Activated CD4-positive, alpha-beta T cell treated with anti-CD3 and anti-CD28 coated beads, Interleukin-2, amount 10 ng/mL, durations not matched to agents 24 days and 14 days (primary cell): ENCODE measurements at regions of chr5 and their contacts with region 1.

Region 1: GRCh38 chr5:94793113-94793815 is 174.8 kb downstream of the SLF1 start:
- DNase-seq: peak; percentile 84
- H3K4me3 Mint-ChIP-seq: peak overlapping the region; percentile 78
- H3K27ac Mint-ChIP-seq: peak overlapping the region; percentile 95
- H3K4me1 Mint-ChIP-seq: peaks cover 42% of the 10 kb centered on the region
- H3K27me3 Mint-ChIP-seq: peaks cover 9% of the 10 kb centered on the region

Region 2: DNA sequence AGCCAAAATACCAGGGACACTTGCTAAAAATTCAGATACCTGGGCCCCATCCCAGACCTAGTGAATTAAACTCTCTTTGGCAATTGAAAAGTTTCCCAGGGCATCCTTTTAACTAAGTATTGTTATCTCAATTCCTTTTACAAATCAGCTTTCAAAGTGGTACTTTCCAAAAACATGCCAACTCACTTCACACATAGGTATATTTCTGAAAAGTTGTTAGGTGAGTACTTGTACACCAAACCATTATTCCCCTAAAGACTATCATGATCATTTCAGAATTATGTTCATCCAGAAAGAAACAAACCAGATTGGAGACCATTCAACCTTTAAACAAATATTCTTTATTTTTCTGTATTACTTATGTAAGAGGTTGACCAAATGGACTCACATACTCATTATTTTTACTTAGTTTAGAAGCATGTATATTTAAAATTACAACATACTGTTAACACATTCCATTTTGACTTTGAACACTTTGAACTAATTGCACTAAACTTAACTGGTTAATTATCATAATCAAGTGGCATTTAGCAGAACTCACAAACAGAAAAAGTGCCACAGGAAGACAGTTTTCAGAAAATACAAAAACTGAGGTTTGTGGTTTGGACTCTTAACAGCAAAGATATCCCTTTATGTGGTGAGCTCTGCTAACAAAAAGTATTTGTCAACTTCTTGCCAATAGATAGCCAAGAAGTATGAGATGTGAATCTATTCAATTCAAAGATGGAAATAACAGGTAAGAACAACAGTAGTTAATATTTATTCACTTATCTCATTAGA is 215.6 kb before region 1 on chr5:
- intact Hi-C with region 1: loop called (anchors 1 kb)
- DNase-seq: peak; percentile 75
- H3K4me3 Mint-ChIP-seq: peak overlapping the region; percentile 36
- H3K27ac Mint-ChIP-seq: peak overlapping the region; percentile 20
- H3K4me1 Mint-ChIP-seq: peaks cover 42% of the 10 kb centered on the region
- H3K27me3 Mint-ChIP-seq: no peaks in the 10 kb centered on the region

Region 3: DNA sequence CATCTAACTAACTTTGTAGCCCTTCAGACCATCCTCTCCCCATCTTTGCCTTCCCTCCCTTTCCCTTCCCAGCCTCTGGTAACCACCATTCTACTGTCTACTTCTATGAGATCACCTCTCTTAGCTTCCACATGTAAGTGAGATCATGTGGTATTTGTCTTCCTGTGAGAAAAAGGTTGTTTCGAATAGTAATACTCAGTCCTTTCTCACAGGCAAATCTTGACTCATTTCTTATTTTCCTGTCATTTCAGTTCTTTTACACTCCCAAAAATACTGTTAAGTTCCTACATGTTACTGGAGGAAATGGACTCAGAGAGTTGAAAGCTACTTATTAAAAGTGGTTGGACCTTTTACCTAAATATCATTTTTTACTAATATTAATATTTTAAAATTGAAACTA is 92.7 kb before region 1 on chr5:
- intact Hi-C with region 1: loop called (anchors 5 kb)
- DNase-seq: no peak
- H3K4me3 Mint-ChIP-seq: no peak overlapping the region
- H3K27ac Mint-ChIP-seq: peak overlapping the region; percentile 4
- H3K4me1 Mint-ChIP-seq: peaks cover 11% of the 10 kb centered on the region
- H3K27me3 Mint-ChIP-seq: no peaks in the 10 kb centered on the region

Region 4: DNA sequence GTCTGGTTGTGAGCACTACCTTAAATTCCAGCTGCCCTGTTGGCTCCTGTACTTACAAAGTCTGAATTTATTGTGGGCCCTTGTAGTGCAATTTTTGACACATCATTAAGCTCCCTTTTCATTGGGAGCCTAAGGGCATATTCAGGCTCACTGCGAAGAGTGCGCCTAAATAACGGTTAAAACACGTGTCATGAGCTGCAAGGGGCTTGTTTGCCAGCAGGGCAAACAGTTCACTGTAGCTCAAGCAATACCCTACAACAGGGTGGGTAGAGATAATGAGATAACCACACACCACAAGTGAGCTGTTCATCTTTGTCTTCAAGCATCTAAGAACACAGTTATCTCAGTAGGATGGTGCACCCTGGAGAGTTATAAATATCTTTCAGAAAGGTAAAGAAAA is 39.4 kb after region 1 on chr5:
- intact Hi-C with region 1: loop called (anchors 2 kb)
- DNase-seq: no peak
- H3K4me3 Mint-ChIP-seq: no peak overlapping the region
- H3K27ac Mint-ChIP-seq: no peak overlapping the region
- H3K4me1 Mint-ChIP-seq: peaks cover 6% of the 10 kb centered on the region
- H3K27me3 Mint-ChIP-seq: peaks cover 16% of the 10 kb centered on the region

Region 5: DNA sequence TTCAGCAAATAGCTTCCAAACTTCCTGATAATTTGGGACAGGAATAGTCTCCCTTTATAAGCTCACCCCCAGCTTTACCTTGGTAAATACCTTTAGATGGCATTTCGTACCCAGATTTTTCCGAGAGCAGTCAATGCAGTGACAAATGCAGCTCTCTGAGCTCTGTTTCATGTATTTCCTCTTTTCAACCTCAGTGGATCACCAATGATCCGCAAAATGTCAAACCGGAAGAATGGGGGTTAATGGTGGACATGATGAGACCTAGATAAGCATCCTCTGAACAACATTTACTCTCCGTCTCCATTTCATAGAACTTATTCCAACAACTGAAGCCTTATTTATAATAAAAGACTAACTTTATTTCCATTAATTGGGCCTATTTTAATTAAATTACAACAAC is 264.4 kb after region 1 on chr5:
- intact Hi-C with region 1: no loop called
- DNase-seq: no peak
- H3K4me3 Mint-ChIP-seq: no peak overlapping the region
- H3K27ac Mint-ChIP-seq: no peak overlapping the region
- H3K4me1 Mint-ChIP-seq: no peaks in the 10 kb centered on the region
- H3K27me3 Mint-ChIP-seq: no peaks in the 10 kb centered on the region

Region 6: DNA sequence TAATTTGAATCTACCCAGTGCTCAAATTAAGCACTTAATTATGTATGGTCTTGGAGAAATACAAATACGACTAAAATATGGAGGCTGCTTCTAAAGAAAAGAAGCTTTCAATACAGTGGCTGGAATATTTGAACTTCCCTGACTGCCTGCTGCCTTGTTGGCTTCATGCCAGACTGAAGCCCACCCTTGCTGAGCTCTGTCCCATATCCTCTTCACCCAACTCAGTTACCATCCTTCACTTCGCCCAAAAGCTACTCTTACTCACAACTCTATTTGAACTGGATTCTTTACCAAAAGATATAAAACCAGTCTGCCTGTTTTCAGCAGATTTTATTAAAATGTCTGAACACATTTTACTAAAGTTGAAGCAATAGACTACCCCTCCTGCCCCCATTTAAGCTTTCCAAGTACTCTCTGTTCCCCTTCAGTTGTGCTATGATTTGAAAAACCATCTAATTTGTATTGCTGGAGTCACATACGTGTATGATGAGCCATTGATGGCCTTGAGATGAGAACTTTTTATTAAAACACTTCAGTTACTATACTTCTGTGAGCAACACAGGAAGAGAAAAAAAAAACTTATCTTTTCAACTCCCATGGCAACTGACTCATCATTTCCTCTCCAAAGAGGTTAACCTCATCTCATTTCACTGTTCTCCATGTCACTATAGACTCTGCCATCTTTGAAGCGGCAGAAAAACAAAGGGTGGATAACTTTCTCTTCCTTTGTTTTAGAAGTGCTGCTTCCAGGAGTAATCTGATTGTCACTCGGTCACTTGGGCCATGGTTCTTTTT is 1743.9 kb after region 1 on chr5:
- intact Hi-C with region 1: loop called (anchors 10 kb)
- DNase-seq: peak; percentile 83
- H3K4me3 Mint-ChIP-seq: peak overlapping the region; percentile 56
- H3K27ac Mint-ChIP-seq: peak overlapping the region; percentile 85
- H3K4me1 Mint-ChIP-seq: peaks cover 27% of the 10 kb centered on the region
- H3K27me3 Mint-ChIP-seq: peaks cover 7% of the 10 kb centered on the region